ENCODE measurements at regions of chr2 and their contacts with region 1.

Region 1: GRCh38 chr2:195836002-195836401 is 179.0 kb downstream of the SLC39A10 start:
- DNase-seq: no peak
- H3K4me3 ChIP-seq: no peak overlapping the region
- H3K27ac ChIP-seq: no peak overlapping the region
- H3K4me1 ChIP-seq: no peaks in the 10 kb centered on the region
- H3K27me3 ChIP-seq: no peaks in the 10 kb centered on the region
- CTCF ChIP-seq: no peak

Region 2: DNA sequence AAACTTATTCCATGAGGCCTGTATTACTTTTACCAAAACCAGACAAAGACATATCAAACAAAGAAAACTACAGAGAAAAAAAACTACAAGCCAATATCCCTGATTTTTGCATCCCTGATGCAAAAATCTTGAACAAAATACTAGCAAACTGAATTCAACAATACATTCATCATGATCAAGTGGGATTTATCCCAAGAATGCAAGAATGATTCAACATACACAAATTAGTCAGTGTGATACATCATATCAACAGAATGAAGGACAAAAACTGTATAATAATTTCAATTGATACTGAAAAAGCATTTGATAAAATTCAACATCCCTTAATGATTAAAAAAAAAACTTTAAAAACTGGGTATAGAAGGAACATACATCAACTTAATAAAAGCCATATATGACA is 72.1 kb before region 1 on chr2:
- CTCF ChIA-PET with region 1: no interaction called
- POLR2A ChIA-PET with region 1: interaction called, 14 read pairs
- intact Hi-C with region 1: no loop called
- DNase-seq: no peak
- H3K4me3 ChIP-seq: no peak overlapping the region
- H3K27ac ChIP-seq: no peak overlapping the region
- H3K4me1 ChIP-seq: no peaks in the 10 kb centered on the region
- H3K27me3 ChIP-seq: no peaks in the 10 kb centered on the region
- CTCF ChIP-seq: no peak

Region 3: DNA sequence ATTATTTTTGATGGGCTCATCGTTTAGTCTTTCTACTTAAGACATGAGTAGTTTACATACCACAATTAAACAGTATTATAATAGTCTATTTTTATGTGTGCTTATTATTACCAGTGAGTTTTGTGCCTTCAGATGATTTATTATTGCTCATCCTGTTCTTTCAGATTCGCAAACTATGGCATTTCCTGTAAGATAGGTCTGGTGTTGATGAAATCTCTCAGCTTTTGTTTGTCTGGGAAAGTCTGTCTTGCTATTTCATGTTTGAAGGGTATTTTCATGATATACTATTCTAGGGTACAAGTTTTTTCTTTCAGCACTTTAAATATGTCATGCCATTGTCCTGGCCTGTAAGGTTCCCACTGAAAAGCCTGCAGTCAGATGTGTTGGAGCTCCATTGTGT is 131.3 kb after region 1 on chr2:
- CTCF ChIA-PET with region 1: no interaction called
- POLR2A ChIA-PET with region 1: interaction called, 11 read pairs
- intact Hi-C with region 1: no loop called
- DNase-seq: peak; percentile 90
- H3K4me3 ChIP-seq: no peak overlapping the region
- H3K27ac ChIP-seq: peak overlapping the region; percentile 90
- H3K4me1 ChIP-seq: peaks cover 7% of the 10 kb centered on the region
- H3K27me3 ChIP-seq: no peaks in the 10 kb centered on the region
- CTCF ChIP-seq: no peak